ENCODE measurements at regions of chr16 and their contacts with region 1.

Region 1: DNA sequence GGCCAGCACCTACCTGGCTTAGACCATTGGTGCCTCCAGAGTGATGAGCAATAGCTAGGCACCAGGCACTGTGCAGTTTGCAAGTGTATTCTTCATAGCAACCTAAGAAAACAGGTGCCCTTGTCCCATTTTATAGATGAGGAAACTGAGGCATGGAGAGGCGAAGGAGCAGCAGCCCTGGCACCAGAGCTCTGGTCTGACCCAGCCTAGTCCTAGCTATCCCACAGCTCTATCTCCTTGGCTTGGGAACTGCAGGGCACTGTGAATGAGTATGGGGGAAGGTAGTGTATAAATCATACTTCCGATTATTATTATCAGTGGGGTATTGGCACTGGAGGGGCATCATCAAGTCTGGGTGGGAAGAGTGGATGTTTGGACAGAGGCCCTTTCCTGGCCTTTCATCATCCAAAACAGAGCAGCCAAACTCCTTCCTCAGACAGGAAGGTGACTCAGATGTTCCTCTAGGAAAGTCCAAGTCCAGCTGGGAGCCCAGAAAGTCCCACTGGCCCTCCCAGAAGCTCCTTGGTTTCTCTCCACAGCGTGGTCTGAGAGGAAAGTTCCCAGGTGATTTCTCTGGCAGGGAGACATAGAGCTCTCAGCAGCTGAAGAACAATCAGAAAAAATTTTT is 32.0 kb upstream of the PLLP start:
- DNase-seq: no peak
- ATAC-seq: peak; percentile 79
- H3K4me3 ChIP-seq: no peak overlapping the region
- H3K27ac ChIP-seq: peak overlapping the region; percentile 72
- H3K4me1 ChIP-seq: peaks cover 37% of the 10 kb centered on the region
- H3K27me3 ChIP-seq: no peaks in the 10 kb centered on the region
- CTCF ChIP-seq: no peak

Region 2: DNA sequence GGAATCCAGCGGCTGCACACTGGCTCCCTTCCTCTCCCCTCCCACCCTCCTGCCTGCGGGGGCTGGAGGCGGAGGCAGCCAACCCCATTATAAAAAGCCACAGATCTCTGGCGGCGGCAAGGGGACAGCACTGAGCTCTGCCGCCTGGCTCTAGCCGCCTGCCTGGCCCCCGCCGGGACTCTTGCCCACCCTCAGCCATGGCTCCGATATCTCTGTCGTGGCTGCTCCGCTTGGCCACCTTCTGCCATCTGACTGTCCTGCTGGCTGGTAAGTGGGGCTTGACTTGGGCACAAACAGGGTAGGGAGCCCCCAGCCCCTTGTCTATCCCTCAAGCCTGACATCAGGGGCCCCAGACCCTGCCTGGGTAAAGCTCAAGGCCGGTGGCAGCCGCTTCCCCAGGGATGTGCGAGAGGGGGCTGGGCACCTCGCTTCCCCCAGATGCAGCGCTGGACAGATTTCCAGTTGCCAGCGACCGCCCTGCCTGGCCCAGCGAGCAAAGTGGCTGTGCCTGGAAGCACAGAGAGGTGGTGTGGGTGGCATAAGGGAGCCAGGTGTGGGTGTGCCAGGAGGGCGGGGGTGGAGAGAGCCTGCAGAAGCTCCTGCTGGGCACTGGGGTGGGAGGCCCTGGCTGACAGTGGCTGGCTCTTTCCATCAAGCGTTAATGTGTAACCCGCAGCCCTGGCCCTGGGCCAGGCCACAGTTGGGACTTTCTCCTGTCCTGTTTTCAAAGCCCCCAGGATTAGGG is 56.0 kb after region 1 on chr16 and contains the start of gene CX3CL1:
- CTCF ChIA-PET with region 1: no interaction called
- POLR2A ChIA-PET with region 1: interaction called, 3 read pairs
- in situ Hi-C with region 1: no loop called
- intact Hi-C with region 1: loop called (anchors 5 kb)
- DNase-seq: no peak
- ATAC-seq: peak; percentile 68
- H3K4me3 ChIP-seq: peak within 1 kb of the TSS; percentile 41 to 59
- H3K27ac ChIP-seq: peak within 1 kb of the TSS; percentile 69
- H3K4me1 ChIP-seq: peaks cover 31% of the 10 kb centered on the region
- H3K27me3 ChIP-seq: no peaks in the 10 kb centered on the region
- CTCF ChIP-seq: no peak
- total RNA-seq, gene CX3CL1: 21.8 TPM

Region 3: GRCh38 chr16:58212824-58213655 is 896.5 kb after region 1 on chr16:
- CTCF ChIA-PET with region 1: no interaction called
- POLR2A ChIA-PET with region 1: interaction called, 10 read pairs
- in situ Hi-C with region 1: no loop called
- intact Hi-C with region 1: no loop called
- DNase-seq: no peak
- ATAC-seq: no peak
- H3K4me3 ChIP-seq: no peak overlapping the region
- H3K27ac ChIP-seq: no peak overlapping the region
- H3K4me1 ChIP-seq: no peaks in the 10 kb centered on the region
- H3K27me3 ChIP-seq: peaks cover 5% of the 10 kb centered on the region
- CTCF ChIP-seq: no peak